ENCODE measurements at regions of chr2 and their contacts with region 1.

Region 1: GRCh38 chr2:237854295-237854694 is 5.1 kb upstream of the RAMP1 start:
- DNase-seq: no peak
- ATAC-seq: no peak
- H3K4me3 ChIP-seq: no peak overlapping the region
- H3K4me3 Mint-ChIP-seq: no peak overlapping the region
- H3K27ac ChIP-seq: no peak overlapping the region
- H3K27ac Mint-ChIP-seq: no peak overlapping the region
- H3K4me1 ChIP-seq: peaks cover 0 to 12% of the 10 kb centered on the region in 2 experiments
- H3K4me1 Mint-ChIP-seq: peaks cover 5 to 9% (median 8%) of the 10 kb centered on the region in 3 donors
- H3K27me3 ChIP-seq: peaks cover 2 to 19% of the 10 kb centered on the region in 2 experiments
- H3K27me3 Mint-ChIP-seq: peaks cover 14 to 20% of the 10 kb centered on the region in 2 donors

Region 2: DNA sequence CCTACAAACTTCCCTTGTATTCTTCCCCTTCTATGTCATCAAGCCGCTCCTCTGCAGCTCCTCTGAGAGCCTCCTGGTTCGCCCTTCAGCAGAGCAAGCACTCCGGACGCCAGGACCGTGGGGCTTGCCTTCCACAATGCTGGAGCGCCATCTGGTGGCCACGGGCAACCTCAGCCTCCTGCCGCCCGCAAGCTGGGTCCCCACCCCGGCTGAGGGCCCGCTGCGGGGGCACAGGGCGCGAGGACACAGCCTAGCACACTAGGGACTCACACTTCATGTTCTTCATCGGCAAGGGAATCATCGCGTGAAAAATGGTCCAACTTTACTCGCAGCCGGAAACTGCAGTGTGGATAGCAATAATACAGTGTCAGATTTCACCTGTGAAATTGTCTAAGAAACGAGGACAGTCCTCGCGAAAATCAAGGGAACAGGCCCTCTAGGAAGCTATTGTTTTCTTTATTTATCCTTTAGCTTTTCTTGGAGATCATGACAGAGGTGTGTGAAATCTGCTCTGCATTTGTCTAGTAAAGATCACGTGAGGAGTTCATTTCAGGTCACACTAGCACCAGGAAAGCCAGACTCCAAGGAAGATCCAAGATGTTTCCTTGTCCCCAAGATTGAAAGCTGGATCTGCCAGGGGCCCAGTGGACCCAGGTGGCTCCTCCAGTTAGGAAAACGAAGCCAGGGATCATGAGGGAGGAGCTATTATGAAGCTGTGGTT is 282.1 kb before region 1 on chr2:
- CTCF ChIA-PET with region 1: interaction called in 1 of 2 experiments, 10 read pairs
- POLR2A ChIA-PET with region 1: no interaction called
- DNase-seq: peak; percentile 50 to 89 (median 79)
- ATAC-seq: peak; percentile 85 to 99 (median 90)
- H3K4me3 ChIP-seq: no peak overlapping the region
- H3K4me3 Mint-ChIP-seq: no peak overlapping the region
- H3K27ac ChIP-seq: no peak overlapping the region
- H3K27ac Mint-ChIP-seq: no peak overlapping the region
- H3K4me1 ChIP-seq: peaks cover 0 to 7% of the 10 kb centered on the region in 2 experiments
- H3K4me1 Mint-ChIP-seq: peaks cover 0 to 6% (median 0%) of the 10 kb centered on the region in 3 donors
- H3K27me3 ChIP-seq: peaks cover 0 to 28% of the 10 kb centered on the region in 2 experiments
- H3K27me3 Mint-ChIP-seq: peaks cover 0 to 10% of the 10 kb centered on the region in 2 donors

Region 3: DNA sequence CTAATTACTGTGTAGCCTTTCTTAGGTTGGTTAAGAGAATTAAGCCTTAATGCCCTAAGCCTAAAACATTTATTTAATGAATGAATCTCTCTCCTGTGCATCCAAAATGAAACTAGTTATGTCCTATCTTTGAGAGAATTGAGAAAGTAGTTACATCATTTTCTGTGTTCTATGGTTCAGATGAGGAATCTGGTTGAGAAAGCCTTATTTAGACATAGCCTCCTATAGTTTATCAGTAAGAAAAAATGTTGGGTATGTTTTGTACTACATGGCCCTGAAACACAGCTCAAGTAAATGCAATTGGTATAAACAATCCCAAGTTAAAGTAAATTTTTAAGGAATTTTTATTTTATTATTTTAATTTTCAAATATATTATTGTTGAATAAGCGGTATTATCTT is 20.7 kb before region 1 on chr2:
- CTCF ChIA-PET with region 1: no interaction called
- POLR2A ChIA-PET with region 1: no interaction called
- DNase-seq: no peak
- ATAC-seq: no peak
- H3K4me3 ChIP-seq: no peak overlapping the region
- H3K4me3 Mint-ChIP-seq: no peak overlapping the region
- H3K27ac ChIP-seq: no peak overlapping the region
- H3K27ac Mint-ChIP-seq: no peak overlapping the region
- H3K4me1 ChIP-seq: no peaks in the 10 kb centered on the region
- H3K4me1 Mint-ChIP-seq: no peaks in the 10 kb centered on the region
- H3K27me3 ChIP-seq: no peaks in the 10 kb centered on the region
- H3K27me3 Mint-ChIP-seq: peaks cover 0 to 1% of the 10 kb centered on the region in 2 donors

Region 4: GRCh38 chr2:238948765-238949641 is 1094.7 kb after region 1 on chr2:
- CTCF ChIA-PET with region 1: no interaction called
- POLR2A ChIA-PET with region 1: no interaction called
- DNase-seq: no peak
- ATAC-seq: no peak
- H3K4me3 ChIP-seq: no peak overlapping the region
- H3K4me3 Mint-ChIP-seq: no peak overlapping the region
- H3K27ac ChIP-seq: no peak overlapping the region
- H3K27ac Mint-ChIP-seq: no peak overlapping the region
- H3K4me1 ChIP-seq: peaks cover 0 to 12% of the 10 kb centered on the region in 2 experiments
- H3K4me1 Mint-ChIP-seq: peaks cover 6 to 12% (median 11%) of the 10 kb centered on the region in 3 donors
- H3K27me3 ChIP-seq: peaks cover 0 to 21% of the 10 kb centered on the region in 2 experiments
- H3K27me3 Mint-ChIP-seq: peaks cover 3 to 10% of the 10 kb centered on the region in 2 donors

Measured in T-cell (primary cell).